ENCODE measurements at regions of chr20 and their contacts with region 1.

Region 1: GRCh38 chr20:53750827-53751619 is 157.4 kb upstream of the ZNF217 start:
- DNase-seq: peak; percentile 59
- H3K4me3 Mint-ChIP-seq: peak overlapping the region; percentile 59
- H3K27ac Mint-ChIP-seq: peak overlapping the region; percentile 99
- H3K4me1 Mint-ChIP-seq: peaks cover 63% of the 10 kb centered on the region
- H3K27me3 Mint-ChIP-seq: no peaks in the 10 kb centered on the region

Region 2: DNA sequence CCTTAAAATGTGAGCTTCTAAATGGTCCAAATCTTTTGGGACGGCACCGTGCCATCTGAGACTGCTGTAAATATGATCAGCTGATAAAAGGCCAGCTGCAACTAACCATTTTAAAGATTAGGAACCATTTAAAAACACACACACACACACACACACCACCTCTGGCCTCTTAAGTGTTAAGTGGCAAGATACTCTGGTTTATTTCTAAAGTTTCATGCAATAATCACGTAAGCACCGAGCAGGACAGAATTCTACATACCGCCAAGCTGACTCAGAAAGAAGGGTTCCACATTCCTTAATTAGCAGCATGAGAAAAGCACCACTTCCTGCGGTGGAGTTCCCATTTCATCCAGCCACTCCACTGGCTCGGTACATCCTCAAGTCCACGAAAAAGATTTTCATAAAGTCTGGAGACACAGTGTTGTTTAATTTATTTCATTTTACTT is 139.6 kb before region 1 on chr20:
- intact Hi-C with region 1: no loop called
- DNase-seq: no peak
- H3K4me3 Mint-ChIP-seq: no peak overlapping the region
- H3K27ac Mint-ChIP-seq: no peak overlapping the region
- H3K4me1 Mint-ChIP-seq: peaks cover 28% of the 10 kb centered on the region
- H3K27me3 Mint-ChIP-seq: no peaks in the 10 kb centered on the region

Region 3: GRCh38 chr20:53643031-53643832 is 107.8 kb before region 1 on chr20:
- intact Hi-C with region 1: loop called (anchors 2 kb)
- DNase-seq: peak; percentile 67
- H3K4me3 Mint-ChIP-seq: peak overlapping the region; percentile 76
- H3K27ac Mint-ChIP-seq: peak overlapping the region; percentile 95
- H3K4me1 Mint-ChIP-seq: peaks cover 33% of the 10 kb centered on the region
- H3K27me3 Mint-ChIP-seq: no peaks in the 10 kb centered on the region

Region 4: DNA sequence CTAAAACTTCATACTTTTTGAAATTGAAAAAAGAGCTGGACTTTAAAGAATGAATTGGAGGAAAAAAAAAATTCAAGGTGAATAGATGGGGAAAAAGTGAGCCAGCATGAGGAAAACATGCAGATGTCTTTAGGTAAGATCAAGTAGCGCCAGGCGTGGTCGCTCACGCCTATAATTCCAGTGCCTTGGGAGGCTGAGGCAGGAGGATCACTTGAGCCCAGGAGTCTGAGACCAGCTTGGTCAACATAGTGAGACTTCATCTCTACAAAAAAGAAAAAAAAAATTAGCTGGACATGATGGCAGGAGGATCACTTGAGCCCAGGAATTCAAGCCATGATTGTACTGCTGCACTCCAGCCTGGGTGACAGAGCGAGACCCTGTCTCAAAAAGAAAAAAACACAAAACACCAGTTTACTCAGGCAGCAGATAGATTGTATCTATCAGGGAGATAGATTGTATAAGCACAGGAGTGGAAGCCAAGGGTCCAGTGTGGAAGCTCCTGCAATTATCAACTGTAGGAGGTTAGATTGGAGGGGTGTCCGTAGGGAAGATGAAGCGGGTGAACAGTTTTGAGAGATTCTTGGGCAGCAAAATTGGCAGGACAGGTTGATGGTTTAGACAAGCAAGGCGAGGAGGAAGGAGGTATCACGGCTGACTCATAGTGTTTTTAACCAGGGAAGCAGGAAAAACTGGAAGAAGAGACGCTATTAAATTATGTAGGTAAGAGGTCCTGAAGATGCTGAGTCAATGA is 59.8 kb before region 1 on chr20:
- intact Hi-C with region 1: loop called (anchors 1 kb)
- DNase-seq: no peak
- H3K4me3 Mint-ChIP-seq: no peak overlapping the region
- H3K27ac Mint-ChIP-seq: peak overlapping the region; percentile 0
- H3K4me1 Mint-ChIP-seq: peaks cover 35% of the 10 kb centered on the region
- H3K27me3 Mint-ChIP-seq: no peaks in the 10 kb centered on the region

Region 5: DNA sequence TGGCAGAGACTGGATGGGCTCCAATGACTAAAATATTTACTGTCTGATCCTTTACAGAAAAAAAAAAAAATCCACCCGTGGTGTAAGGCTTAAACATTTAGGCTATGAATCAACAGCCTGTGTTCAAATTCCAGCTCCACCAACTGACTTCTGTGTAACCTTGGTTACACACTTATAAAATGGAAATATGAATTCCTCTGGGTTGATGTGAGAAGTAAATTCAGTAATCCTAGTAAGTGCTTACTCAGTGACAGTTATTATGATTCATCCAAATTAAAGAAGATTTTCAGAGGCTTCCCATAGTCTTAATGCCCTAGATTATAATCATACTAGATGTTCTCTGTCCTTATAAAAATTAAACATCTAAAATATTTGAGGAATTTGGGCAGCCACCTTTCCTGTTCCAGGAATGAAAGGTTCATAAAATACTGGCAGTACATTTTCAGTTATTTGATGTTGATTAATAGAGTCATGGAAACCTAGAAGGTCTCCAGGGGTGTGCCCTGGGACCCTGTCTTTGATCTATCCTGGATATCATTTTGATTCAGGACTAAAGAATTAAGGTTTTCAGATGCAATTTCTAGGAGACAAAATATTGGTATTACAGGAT is 22.9 kb after region 1 on chr20:
- intact Hi-C with region 1: no loop called
- DNase-seq: no peak
- H3K4me3 Mint-ChIP-seq: no peak overlapping the region
- H3K27ac Mint-ChIP-seq: no peak overlapping the region
- H3K4me1 Mint-ChIP-seq: peaks cover 5% of the 10 kb centered on the region
- H3K27me3 Mint-ChIP-seq: no peaks in the 10 kb centered on the region

Region 6: GRCh38 chr20:53839423-53840176 is 88.6 kb after region 1 on chr20:
- intact Hi-C with region 1: loop called (anchors 2 kb)
- DNase-seq: peak; percentile 64
- H3K4me3 Mint-ChIP-seq: peak overlapping the region; percentile 73
- H3K27ac Mint-ChIP-seq: peak overlapping the region; percentile 84
- H3K4me1 Mint-ChIP-seq: peaks cover 62% of the 10 kb centered on the region
- H3K27me3 Mint-ChIP-seq: no peaks in the 10 kb centered on the region

Region 7: DNA sequence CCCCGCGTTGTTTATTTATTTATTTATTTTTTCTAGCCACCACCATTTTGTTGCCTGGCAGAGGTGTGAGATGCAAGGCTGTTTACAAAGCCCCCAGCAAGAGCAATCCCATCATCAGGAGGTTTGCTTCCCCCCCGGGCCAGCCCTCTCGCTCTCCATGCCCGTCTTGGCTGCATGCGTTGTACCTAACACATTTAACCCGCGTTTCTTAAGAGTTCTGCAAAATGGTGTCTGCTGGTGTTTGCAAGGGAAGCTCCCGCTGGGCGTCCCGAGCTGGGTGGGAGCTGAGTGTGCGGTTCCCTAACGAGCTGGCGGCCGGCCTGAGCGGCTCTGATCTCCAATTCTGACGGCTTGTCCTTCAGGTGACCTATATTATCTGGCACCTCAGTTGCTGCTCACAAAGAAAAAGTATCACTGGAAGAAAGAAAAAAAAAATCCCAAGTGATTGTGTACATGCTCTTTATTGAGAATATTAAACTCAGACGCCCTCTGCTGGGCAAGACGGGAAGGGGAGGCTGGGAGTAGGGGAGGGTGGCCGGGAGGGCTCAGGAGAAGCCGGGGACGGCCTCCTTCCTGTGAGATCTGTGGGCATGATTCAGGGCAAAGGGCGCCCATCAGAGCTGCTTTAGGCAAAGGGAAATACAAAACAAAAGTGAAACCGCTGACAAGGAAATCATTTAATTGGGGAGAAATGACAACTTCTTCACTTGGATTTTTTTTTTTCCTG is 164.6 kb after region 1 on chr20:
- intact Hi-C with region 1: loop called (anchors 2 kb)
- DNase-seq: peak; percentile 89
- H3K4me3 Mint-ChIP-seq: peak overlapping the region; percentile 89
- H3K27ac Mint-ChIP-seq: peak overlapping the region; percentile 92
- H3K4me1 Mint-ChIP-seq: peaks cover 51% of the 10 kb centered on the region
- H3K27me3 Mint-ChIP-seq: no peaks in the 10 kb centered on the region